IMR-90 (cell line): ENCODE measurements at regions of chr17 and their contacts with region 1.

Region 1: DNA sequence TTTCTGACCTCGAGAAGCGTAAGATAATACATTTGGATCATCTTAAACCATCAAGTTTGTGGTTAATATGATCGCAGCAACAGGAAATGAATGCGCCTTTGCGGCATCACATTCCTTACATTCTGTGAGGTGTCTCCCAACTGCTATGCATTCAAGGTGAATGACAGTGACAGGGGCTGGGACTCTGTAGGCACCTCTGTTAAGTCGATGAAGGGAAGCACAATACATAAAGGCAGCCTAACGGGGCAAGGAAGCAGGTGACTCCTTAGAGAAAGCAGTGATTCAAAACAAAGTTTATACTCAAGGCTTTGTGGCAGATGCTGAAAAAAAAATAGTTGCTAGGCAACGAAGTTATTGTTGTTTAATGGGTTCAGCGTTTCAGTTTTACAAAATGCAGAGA is 21.6 kb upstream of the EVPL start:
- DNase-seq: peak; percentile 16
- ATAC-seq: no peak
- H3K4me3 ChIP-seq: no peak overlapping the region
- H3K27ac ChIP-seq: no peak overlapping the region
- H3K4me1 ChIP-seq: no peaks in the 10 kb centered on the region; the same call in 1 of the 2 replicates
- H3K27me3 ChIP-seq: no peaks in the 10 kb centered on the region
- CTCF ChIP-seq: no peak
- POLR2A ChIP-seq: no peak
- RAD21 ChIP-seq: no peak

Region 2: GRCh38 chr17:75895352-75896155 is 153.2 kb before region 1 on chr17:
- CTCF ChIA-PET with region 1: no interaction called
- POLR2A ChIA-PET with region 1: no interaction called
- dilution Hi-C with region 1: no loop called
- in situ Hi-C with region 1: no loop called
- intact Hi-C with region 1: no loop called
- DNase-seq: no peak
- ATAC-seq: peak; percentile 1
- H3K4me3 ChIP-seq: peak overlapping the region; percentile 45
- H3K27ac ChIP-seq: peak overlapping the region; percentile 28
- H3K4me1 ChIP-seq: peaks cover 7% of the 10 kb centered on the region; the same call in 1 of the 2 replicates
- H3K27me3 ChIP-seq: no peaks in the 10 kb centered on the region
- CTCF ChIP-seq: peak; percentile 39
- POLR2A ChIP-seq: no peak
- RAD21 ChIP-seq: no peak

Region 3: GRCh38 chr17:76065754-76066153 is 17.0 kb after region 1 on chr17:
- CTCF ChIA-PET with region 1: interaction called, 3 read pairs
- POLR2A ChIA-PET with region 1: interaction called, 23 read pairs
- dilution Hi-C with region 1: no loop called
- in situ Hi-C with region 1: no loop called
- intact Hi-C with region 1: no loop called
- DNase-seq: no peak
- ATAC-seq: no peak
- H3K4me3 ChIP-seq: no peak overlapping the region
- H3K27ac ChIP-seq: no peak overlapping the region
- H3K4me1 ChIP-seq: no peaks in the 10 kb centered on the region
- H3K27me3 ChIP-seq: no peaks in the 10 kb centered on the region
- CTCF ChIP-seq: no peak
- POLR2A ChIP-seq: no peak
- RAD21 ChIP-seq: no peak